CD4-positive, alpha-beta T cell (primary cell): ENCODE measurements at regions of chr11 and their contacts with region 1.

Region 1: DNA sequence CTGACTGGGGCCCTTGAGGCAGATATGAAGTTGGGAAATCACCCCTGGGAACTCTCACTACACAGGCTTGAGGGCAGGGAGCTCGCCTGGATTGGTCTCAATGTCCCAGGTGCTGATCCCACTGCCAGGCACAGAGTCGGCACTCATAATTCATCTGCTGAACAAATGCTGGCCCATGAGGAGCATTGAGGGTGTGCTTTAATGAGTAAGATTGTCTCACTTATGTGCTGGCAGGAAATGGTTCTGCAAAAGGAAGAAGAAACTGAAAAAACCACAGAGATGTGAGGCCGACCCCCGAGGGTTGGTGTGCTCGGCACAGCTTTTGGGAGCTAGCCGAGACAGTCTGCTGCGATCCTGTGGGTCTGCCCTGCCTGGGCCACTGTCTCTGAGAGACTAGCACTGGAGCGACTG is 9.4 kb downstream of the PLAAT2 start:
- DNase-seq: peak in 13 of 14 experiments; percentile 40 to 82 (median 62)
- ATAC-seq: peak; percentile 80
- H3K4me3 ChIP-seq: peak overlapping the region; percentile 15
- H3K4me3 Mint-ChIP-seq: peak overlapping the region; percentile 90
- H3K27ac ChIP-seq: peak overlapping the region; percentile 48 to 63
- H3K27ac Mint-ChIP-seq: peak overlapping the region; percentile 89
- H3K4me1 ChIP-seq: peaks cover 47% of the 10 kb centered on the region
- H3K4me1 Mint-ChIP-seq: peaks cover 71% of the 10 kb centered on the region
- H3K27me3 ChIP-seq: no peaks in the 10 kb centered on the region
- H3K27me3 Mint-ChIP-seq: no peaks in the 10 kb centered on the region
- CTCF ChIP-seq: no peak

Region 2: DNA sequence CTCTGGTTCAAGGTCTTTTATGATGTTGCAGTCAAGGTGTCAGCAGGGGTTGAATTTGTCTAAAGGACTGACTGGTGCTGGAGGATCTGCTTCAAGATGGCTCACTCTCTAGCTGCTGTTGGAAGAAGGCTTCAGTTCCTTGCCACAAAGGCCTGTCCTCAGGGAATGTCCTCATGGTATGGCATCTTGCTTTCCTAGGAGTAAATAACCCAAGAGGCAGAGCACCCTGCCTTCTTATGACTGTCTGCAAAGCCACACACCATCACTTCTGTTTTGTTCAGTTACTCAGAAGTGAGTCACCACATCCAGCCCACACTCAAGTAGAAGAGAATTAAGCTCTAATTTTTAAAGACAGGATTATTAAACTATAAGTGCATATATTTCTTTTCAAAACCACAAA is 108.0 kb before region 1 on chr11:
- CTCF ChIA-PET with region 1: no interaction called
- POLR2A ChIA-PET with region 1: no interaction called
- intact Hi-C with region 1: no loop called
- DNase-seq: no peak
- ATAC-seq: no peak
- H3K4me3 ChIP-seq: no peak overlapping the region
- H3K4me3 Mint-ChIP-seq: no peak overlapping the region
- H3K27ac ChIP-seq: no peak overlapping the region
- H3K27ac Mint-ChIP-seq: no peak overlapping the region
- H3K4me1 ChIP-seq: no peaks in the 10 kb centered on the region
- H3K4me1 Mint-ChIP-seq: peaks cover 5% of the 10 kb centered on the region
- H3K27me3 ChIP-seq: no peaks in the 10 kb centered on the region
- H3K27me3 Mint-ChIP-seq: peaks cover 16% of the 10 kb centered on the region
- CTCF ChIP-seq: no peak

Region 3: GRCh38 chr11:63478896-63479295 is 74.8 kb before region 1 on chr11:
- CTCF ChIA-PET with region 1: no interaction called
- POLR2A ChIA-PET with region 1: interaction called, 3 read pairs
- intact Hi-C with region 1: loop called in 1 of 2 experiments (anchors 5 kb)
- DNase-seq: peak; percentile 18 to 79 (median 38)
- ATAC-seq: peak; percentile 61
- H3K4me3 ChIP-seq: no peak overlapping the region
- H3K4me3 Mint-ChIP-seq: no peak overlapping the region
- H3K27ac ChIP-seq: no peak overlapping the region
- H3K27ac Mint-ChIP-seq: no peak overlapping the region
- H3K4me1 ChIP-seq: peaks cover 2% of the 10 kb centered on the region
- H3K4me1 Mint-ChIP-seq: no peaks in the 10 kb centered on the region
- H3K27me3 ChIP-seq: no peaks in the 10 kb centered on the region
- H3K27me3 Mint-ChIP-seq: peaks cover 12% of the 10 kb centered on the region
- CTCF ChIP-seq: peak; percentile 93

Region 4: GRCh38 chr11:63543711-63544110 is 10.0 kb before region 1 on chr11:
- CTCF ChIA-PET with region 1: no interaction called
- POLR2A ChIA-PET with region 1: interaction called, 86 read pairs
- intact Hi-C with region 1: no loop called
- DNase-seq: no peak
- ATAC-seq: no peak
- H3K4me3 ChIP-seq: no peak overlapping the region
- H3K4me3 Mint-ChIP-seq: no peak overlapping the region
- H3K27ac ChIP-seq: peak overlapping the region in 1 of 2 donors; percentile 1
- H3K27ac Mint-ChIP-seq: peak overlapping the region; percentile 57
- H3K4me1 ChIP-seq: peaks cover 35% of the 10 kb centered on the region
- H3K4me1 Mint-ChIP-seq: peaks cover 36% of the 10 kb centered on the region
- H3K27me3 ChIP-seq: no peaks in the 10 kb centered on the region
- H3K27me3 Mint-ChIP-seq: no peaks in the 10 kb centered on the region
- CTCF ChIP-seq: no peak

Region 5: DNA sequence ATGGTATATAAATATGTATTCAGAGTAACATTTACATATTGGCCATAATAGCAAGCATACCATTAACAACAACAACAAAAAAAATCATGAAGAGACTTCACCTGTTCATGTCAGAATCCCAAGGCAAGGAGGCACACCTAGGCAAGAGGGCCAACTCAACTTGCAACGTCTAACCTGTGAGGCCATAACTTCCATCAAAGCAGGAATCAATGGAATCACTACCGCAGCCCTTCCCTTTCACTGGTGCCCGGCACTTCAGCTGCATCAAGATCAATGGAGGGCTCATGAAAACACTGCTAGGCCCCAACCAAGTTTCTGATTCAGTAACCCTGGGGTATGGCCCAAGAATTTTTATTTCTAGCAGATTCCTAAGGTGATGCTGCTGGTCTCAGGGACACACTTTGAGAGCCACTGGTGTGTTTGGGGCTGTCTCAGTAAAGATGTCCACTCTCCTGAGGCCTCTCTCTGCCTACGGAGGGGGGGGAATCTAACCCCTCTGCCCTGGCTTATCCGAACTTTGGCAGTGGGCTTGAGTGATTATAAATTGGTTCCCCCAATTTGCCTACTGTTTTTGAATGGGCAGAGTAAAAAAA is 206.8 kb after region 1 on chr11:
- CTCF ChIA-PET with region 1: no interaction called
- POLR2A ChIA-PET with region 1: no interaction called
- intact Hi-C with region 1: no loop called
- DNase-seq: no peak
- ATAC-seq: no peak
- H3K4me3 ChIP-seq: no peak overlapping the region
- H3K4me3 Mint-ChIP-seq: no peak overlapping the region
- H3K27ac ChIP-seq: no peak overlapping the region
- H3K27ac Mint-ChIP-seq: no peak overlapping the region
- H3K4me1 ChIP-seq: no peaks in the 10 kb centered on the region
- H3K4me1 Mint-ChIP-seq: no peaks in the 10 kb centered on the region
- H3K27me3 ChIP-seq: no peaks in the 10 kb centered on the region
- H3K27me3 Mint-ChIP-seq: no peaks in the 10 kb centered on the region
- CTCF ChIP-seq: no peak